GM10248 (cell line): ENCODE measurements at regions of chr11 and their contacts with region 1.

Region 1: DNA sequence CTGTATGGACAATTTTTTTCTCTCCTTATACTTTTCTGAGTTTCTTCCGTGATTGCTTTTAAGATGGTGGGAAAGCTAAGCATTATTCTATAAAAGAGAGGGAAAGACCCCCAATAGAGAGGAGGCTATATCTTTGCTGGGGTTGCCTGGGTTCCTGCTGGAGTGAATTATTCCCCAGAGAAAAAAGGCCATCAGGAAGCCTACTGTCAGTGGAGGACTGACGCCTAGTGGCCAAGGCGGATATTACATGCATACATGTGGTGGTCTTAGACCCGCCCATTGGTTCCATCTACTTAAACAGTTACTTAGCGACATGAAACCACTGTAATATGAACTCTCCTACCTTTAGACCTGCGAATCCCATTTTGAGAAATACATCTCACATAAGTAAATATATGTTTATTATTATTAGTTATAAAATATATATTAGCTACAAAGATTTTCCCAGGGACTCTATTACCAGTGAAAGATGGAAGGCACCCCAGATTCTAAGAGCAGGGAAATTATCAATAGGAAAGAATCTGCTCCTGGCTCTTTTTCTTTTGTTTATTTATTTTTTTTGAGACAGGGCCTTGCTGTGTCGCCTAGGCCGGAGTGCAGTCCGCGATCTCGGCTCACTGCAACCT is 15.7 kb upstream of the PGA3 start:
- DNase-seq: peak; percentile 82
- CTCF ChIP-seq: peak; percentile 87

Region 2: DNA sequence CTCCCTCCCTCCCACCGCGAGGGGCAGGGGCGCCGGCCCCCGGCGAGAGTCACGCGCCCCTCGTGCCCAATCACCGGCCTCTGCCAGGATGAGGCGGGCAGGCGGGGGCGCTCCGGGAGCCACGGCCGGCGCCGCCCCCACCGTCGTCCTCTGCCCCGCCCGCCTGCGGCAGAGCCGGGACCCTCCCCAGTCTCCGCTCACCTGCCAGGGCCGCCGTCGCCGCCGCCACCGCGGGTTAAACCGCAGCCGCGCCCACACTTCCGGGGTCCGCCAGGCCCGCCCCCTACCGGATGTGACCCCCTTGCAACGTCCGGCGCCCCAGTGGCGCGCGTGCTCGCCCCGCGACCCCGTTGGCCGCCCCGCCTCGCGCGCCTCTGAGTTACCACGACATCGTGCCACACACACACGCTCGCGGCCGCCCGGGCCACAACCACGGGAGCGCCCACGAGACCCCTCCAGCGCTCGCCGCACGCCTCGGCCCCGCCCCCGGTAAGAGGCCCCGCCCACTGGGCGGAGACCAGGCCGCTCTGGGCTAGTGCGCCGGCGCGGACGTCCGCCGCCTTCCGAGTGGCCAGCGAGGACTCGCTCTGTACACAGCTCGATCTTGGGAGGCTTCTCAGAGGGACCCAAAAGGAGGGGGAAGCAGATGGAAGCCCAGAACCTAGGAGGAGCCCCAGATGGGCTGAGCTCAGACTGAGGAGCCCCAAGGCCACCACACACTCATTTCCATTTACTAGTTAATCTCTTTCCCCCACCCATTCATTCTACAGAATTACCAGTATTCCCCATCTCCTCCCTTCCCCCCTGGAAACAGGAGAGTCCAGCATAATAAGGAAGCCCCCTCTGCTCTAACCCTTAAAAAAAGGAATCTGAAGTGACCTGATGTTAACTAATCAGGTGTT is 26.2 kb before region 1 on chr11 and contains the start of gene VPS37C:
- CTCF ChIA-PET with region 1: interaction called, 16 read pairs
- POLR2A ChIA-PET with region 1: no interaction called
- DNase-seq: peak; percentile 96
- CTCF ChIP-seq: peak; percentile 3

Region 3: DNA sequence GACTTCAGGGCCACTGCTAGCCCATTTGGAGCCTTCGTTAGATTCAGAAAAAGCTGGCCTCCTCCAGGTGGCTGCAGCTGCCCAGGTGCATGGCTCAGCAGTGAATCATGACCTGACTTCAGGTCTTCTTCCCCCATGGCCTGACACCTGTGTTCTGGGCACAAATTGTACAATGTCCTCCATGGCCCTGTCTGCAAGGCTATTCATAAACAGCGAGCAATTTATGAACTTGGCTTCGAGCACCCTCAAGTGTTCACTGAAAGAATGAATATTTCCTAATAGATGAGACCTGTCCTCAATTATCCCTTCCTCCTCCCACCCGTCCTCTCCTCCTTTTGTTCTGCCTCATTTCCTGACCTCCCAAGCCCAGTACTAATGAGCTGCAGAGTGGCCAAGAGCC is 14.2 kb before region 1 on chr11:
- CTCF ChIA-PET with region 1: interaction called, 53 read pairs
- POLR2A ChIA-PET with region 1: no interaction called
- DNase-seq: no peak
- CTCF ChIP-seq: peak; percentile 20